ENCODE measurements at regions of chr11 and their contacts with region 1.

Region 1: DNA sequence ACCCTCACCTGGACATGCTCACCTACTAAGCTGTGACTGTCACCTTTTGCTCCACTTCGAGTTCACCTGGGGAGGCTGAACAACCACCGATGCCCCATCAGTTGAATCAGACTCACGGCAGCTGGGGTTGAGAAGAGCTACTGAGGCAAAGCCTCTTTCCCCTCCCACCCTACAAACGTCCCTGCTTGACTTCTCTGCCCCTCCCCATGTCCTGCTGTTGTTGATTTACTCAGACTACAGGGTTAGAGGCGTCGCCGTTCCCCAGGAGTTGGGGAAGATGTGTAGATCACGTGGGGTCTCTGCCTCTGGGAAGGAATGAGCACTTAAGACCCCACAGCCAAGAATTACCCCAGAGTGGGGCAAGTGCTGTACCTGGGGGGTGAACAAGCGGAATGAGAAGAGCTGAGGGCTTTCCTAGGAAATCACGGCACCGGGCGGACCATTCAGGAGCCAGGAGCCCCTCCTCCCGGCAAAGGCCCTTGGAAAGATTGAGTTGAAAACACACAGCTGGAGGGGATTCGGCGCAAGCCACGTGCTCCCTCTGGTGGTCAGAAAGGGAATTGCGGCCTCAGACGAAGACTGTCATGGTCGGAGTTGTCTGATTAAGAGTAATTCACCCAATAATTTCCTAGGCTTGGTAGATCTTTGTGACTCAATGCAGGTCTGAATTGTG is 7.0 kb downstream of the FXYD2 start:
- DNase-seq: peak; percentile 94

Region 2: GRCh38 chr11:117426269-117426685 is 391.2 kb before region 1 on chr11:
- intact Hi-C with region 1: loop called in 1 of 2 experiments (anchors 10 kb)
- DNase-seq: peak; percentile 89

Region 3: GRCh38 chr11:117443266-117444195 is 374.0 kb before region 1 on chr11:
- intact Hi-C with region 1: loop called in 1 of 2 experiments (anchors 5 kb)
- DNase-seq: peak; percentile 89

Region 4: DNA sequence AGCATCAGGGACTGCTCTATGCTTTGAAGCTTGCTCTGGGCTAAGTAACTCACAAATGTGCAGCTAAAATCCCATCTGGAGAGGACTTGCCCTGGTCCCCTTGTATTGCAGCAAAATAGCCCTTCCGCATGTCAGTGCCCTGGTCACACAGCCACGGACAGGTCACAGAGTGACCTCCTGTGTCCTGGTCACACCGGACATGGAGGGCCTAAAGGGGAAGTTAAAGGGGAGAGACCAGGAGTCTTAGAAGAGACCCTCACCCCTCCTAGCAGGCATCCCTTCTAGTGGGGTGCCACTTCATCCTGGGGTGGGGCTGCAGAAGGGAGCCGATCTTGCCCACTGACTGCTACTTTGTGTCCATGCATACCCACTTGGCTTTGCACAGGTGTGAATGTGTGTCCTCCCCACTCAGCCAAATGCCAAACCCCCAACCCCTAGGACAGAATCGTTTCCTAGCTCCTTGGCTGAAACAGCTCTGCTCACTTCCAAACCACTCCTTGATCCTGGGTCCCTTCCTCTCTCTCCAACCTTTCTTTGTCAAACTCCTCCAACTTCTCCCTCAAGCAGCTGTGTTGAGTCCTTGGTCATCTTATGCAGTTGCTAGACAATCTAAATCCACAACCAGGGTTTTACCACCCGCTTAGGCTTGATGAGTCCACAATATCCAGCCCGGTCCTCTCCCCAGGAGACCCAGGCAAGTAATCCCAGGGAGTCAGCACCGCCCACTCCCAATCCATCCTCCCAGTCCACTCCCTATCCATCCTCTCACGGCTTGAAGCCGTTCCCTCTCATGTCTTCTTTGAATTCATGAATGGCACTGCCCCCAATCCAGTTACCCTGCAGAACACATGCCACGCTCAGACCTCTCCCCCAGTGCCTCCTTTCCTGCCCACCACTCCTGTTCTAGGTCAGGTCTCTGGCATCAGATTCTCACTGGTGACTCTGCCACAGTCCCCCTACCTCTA is 62.3 kb after region 1 on chr11:
- intact Hi-C with region 1: loop called in 1 of 2 experiments (anchors 1 kb)
- DNase-seq: peak; percentile 63